ENCODE measurements at regions of chr17 and their contacts with region 1.

Region 1: GRCh38 chr17:48747445-48748363 is 19.2 kb upstream of the HOXB13 start:
- DNase-seq: no peak
- ATAC-seq: no peak
- H3K4me3 ChIP-seq: no peak overlapping the region
- H3K4me3 Mint-ChIP-seq: no peak overlapping the region
- H3K27ac ChIP-seq: no peak overlapping the region
- H3K27ac Mint-ChIP-seq: peak overlapping the region in 2 of 9 donors; percentile 12 to 31
- H3K4me1 ChIP-seq: no peaks in the 10 kb centered on the region
- H3K4me1 Mint-ChIP-seq: peaks cover 5 to 14% (median 9%) of the 10 kb centered on the region in 7 donors
- H3K27me3 ChIP-seq: peaks cover 40 to 82% of the 10 kb centered on the region in 2 donors
- H3K27me3 Mint-ChIP-seq: peaks cover 83 to 98% (median 92%) of the 10 kb centered on the region in 5 donors

Region 2: DNA sequence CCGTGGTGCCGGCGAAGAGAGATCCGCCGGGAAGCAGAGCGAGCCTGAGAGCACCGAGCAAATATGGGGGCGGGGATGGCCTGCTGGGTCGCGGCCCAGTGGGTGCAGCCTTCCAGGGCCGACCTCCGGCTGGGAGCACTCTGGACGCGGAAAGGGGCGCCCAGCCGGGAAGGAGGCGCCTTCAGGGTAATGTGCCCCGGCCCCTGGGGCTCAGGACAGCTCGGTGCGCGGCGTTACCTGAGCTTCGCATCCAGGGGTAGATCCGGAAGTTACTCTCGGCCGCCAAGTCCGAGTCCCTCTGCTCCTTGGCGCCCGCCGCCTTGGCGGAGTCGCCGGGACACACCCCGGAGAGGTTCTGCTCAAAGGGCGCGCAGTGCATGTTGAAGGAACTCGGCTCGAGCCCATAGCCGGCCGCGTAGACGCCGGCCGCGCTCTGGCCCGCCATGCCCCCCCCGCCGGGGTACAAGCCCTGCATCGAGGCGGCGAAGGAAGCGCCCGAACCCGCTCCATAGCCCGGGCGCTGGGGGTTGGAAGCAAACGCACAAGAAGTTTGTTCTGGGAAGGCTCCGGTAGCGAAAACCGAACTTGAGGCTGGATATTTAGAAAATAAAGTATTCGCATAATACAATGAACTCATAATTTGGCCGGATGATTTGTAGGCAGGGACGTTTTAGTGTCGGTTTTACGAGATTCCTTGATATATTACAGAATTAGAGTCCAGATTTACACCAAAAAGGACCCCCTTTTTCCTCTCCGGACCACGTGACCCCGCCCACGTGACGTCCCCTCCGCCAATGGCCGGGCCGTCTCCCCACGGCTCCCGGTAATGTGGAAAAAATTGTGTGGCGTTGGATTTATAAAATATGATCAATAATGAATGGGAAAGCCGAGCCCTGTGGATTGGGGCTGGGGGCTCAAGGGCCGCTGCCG is 137.2 kb before region 1 on chr17 and contains the start of gene HOXB7:
- CTCF ChIA-PET with region 1: no interaction called
- POLR2A ChIA-PET with region 1: no interaction called
- intact Hi-C with region 1: loop called in 1 of 2 experiments (anchors 5 kb)
- DNase-seq: peak in 3 of 9 donors; percentile 21 to 73 (median 32)
- ATAC-seq: peak; percentile 36
- H3K4me3 ChIP-seq: peak within 1 kb of the TSS; percentile 81
- H3K4me3 Mint-ChIP-seq: peak within 1 kb of the TSS; percentile 74 to 97 (median 90)
- H3K27ac ChIP-seq: no peak within 1 kb of the TSS
- H3K27ac Mint-ChIP-seq: peak within 1 kb of the TSS in 6 of 9 donors; percentile 26 to 77 (median 70)
- H3K4me1 ChIP-seq: peaks cover 28 to 42% of the 10 kb centered on the region in 2 donors
- H3K4me1 Mint-ChIP-seq: peaks cover 30 to 49% (median 44%) of the 10 kb centered on the region in 7 donors
- H3K27me3 ChIP-seq: peaks cover 11 to 46% of the 10 kb centered on the region in 2 donors
- H3K27me3 Mint-ChIP-seq: peaks cover 73 to 83% (median 77%) of the 10 kb centered on the region in 5 donors
- total RNA-seq, gene HOXB7: 0.31 TPM in 1 of 5 experiments, not detected in the others

Region 3: GRCh38 chr17:48625495-48626244 is 122.0 kb before region 1 on chr17:
- CTCF ChIA-PET with region 1: no interaction called
- POLR2A ChIA-PET with region 1: no interaction called
- intact Hi-C with region 1: loop called in 1 of 2 experiments (anchors 5 kb)
- DNase-seq: peak in 4 of 9 donors; percentile 33 to 59 (median 36)
- ATAC-seq: peak; percentile 64
- H3K4me3 ChIP-seq: peak overlapping the region; percentile 62
- H3K4me3 Mint-ChIP-seq: peak overlapping the region; percentile 80 to 91 (median 84)
- H3K27ac ChIP-seq: no peak overlapping the region
- H3K27ac Mint-ChIP-seq: peak overlapping the region in 1 of 9 donors; percentile 88
- H3K4me1 ChIP-seq: peaks cover 15 to 16% of the 10 kb centered on the region in 2 donors
- H3K4me1 Mint-ChIP-seq: peaks cover 13 to 18% (median 14%) of the 10 kb centered on the region in 7 donors
- H3K27me3 ChIP-seq: peaks cover 32 to 44% of the 10 kb centered on the region in 2 donors
- H3K27me3 Mint-ChIP-seq: peaks cover 81 to 92% (median 88%) of the 10 kb centered on the region in 5 donors

Region 4: GRCh38 chr17:48724251-48725003 is 23.3 kb before region 1 on chr17:
- CTCF ChIA-PET with region 1: no interaction called
- POLR2A ChIA-PET with region 1: interaction called, 3 read pairs
- intact Hi-C with region 1: loop called in 1 of 2 experiments (anchors 2 kb)
- DNase-seq: peak; percentile 46 to 73 (median 65)
- ATAC-seq: peak; percentile 81
- H3K4me3 ChIP-seq: no peak overlapping the region
- H3K4me3 Mint-ChIP-seq: peak overlapping the region; percentile 64 to 82 (median 74)
- H3K27ac ChIP-seq: no peak overlapping the region
- H3K27ac Mint-ChIP-seq: peak overlapping the region in 2 of 9 donors; percentile 34 to 87
- H3K4me1 ChIP-seq: peaks cover 27 to 36% of the 10 kb centered on the region in 2 donors
- H3K4me1 Mint-ChIP-seq: peaks cover 26 to 61% (median 41%) of the 10 kb centered on the region in 7 donors
- H3K27me3 ChIP-seq: peaks cover 43 to 92% of the 10 kb centered on the region in 2 donors
- H3K27me3 Mint-ChIP-seq: peaks cover 87 to 99% (median 90%) of the 10 kb centered on the region in 5 donors

Region 5: DNA sequence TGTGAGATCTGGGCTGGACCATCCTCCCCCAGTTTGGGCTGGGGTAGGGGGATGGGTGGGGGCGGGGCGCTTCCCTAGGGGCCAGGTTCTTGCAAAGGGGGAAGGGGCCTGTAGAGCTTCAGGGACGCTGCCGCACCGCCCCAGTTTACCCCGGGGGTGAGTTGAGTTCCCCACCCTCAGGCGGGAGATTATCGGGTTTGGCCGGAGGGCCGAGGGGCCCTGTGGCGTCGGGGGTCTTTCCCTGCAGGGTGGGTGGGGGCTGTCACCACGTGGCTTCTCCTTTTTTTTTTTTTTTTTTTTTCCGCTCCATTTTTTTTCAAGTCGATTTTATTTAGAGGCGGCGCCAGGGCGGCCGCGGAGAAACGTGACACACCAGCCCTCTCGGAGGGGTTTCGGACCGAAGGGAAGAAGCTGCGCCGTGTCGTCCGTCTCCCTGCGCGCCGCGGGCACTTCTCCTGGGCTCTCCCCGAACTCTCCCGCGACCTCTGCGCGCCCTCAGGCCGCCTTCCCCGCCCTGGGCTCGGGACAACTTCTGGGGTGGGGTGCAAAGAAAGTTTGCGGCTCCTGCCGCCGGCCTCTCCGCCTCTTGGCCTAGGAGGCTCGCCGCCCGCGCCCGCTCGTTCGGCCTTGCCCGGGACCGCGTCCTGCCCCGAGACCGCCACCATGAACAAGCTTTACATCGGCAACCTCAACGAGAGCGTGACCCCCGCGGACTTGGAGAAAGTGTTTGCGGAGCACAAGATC is 249.6 kb after region 1 on chr17 and contains the start of gene IGF2BP1:
- CTCF ChIA-PET with region 1: no interaction called
- POLR2A ChIA-PET with region 1: no interaction called
- intact Hi-C with region 1: loop called in 1 of 2 experiments (anchors 2 kb)
- DNase-seq: peak in 4 of 9 donors; percentile 15 to 31 (median 23)
- ATAC-seq: peak; percentile 24
- H3K4me3 ChIP-seq: peak within 1 kb of the TSS; percentile 12
- H3K4me3 Mint-ChIP-seq: peak within 1 kb of the TSS; percentile 64 to 82 (median 72)
- H3K27ac ChIP-seq: no peak within 1 kb of the TSS
- H3K27ac Mint-ChIP-seq: peak within 1 kb of the TSS in 2 of 9 donors; percentile 65 to 82
- H3K4me1 ChIP-seq: peaks cover 8 to 22% of the 10 kb centered on the region in 2 donors
- H3K4me1 Mint-ChIP-seq: peaks cover 14 to 40% (median 23%) of the 10 kb centered on the region in 7 donors
- H3K27me3 ChIP-seq: peaks cover 35 to 74% of the 10 kb centered on the region in 2 donors
- H3K27me3 Mint-ChIP-seq: peaks cover 79 to 88% (median 84%) of the 10 kb centered on the region in 5 donors
- total RNA-seq, gene IGF2BP1: not detected

Region 6: GRCh38 chr17:49968380-49969133 is 1220.9 kb after region 1 on chr17:
- CTCF ChIA-PET with region 1: no interaction called
- POLR2A ChIA-PET with region 1: no interaction called
- intact Hi-C with region 1: loop called in 1 of 2 experiments (anchors 10 kb)
- DNase-seq: peak; percentile 46 to 77 (median 71)
- ATAC-seq: peak; percentile 83
- H3K4me3 ChIP-seq: peak overlapping the region; percentile 81
- H3K4me3 Mint-ChIP-seq: peak overlapping the region; percentile 82 to 94 (median 90)
- H3K27ac ChIP-seq: no peak overlapping the region
- H3K27ac Mint-ChIP-seq: peak overlapping the region in 7 of 9 donors; percentile 47 to 91 (median 65)
- H3K4me1 ChIP-seq: peaks cover 9 to 40% of the 10 kb centered on the region in 2 donors
- H3K4me1 Mint-ChIP-seq: peaks cover 25 to 79% (median 57%) of the 10 kb centered on the region in 7 donors
- H3K27me3 ChIP-seq: peaks cover 11 to 41% of the 10 kb centered on the region in 2 donors
- H3K27me3 Mint-ChIP-seq: peaks cover 63 to 93% (median 72%) of the 10 kb centered on the region in 5 donors